MCF 10A (cell line): ENCODE measurements at regions of chr4 and their contacts with region 1.

Region 1: GRCh38 chr4:56843421-56843899 is 22.0 kb upstream of the SPINK2 start:
- DNase-seq: no peak
- H3K4me3 Mint-ChIP-seq: no peak overlapping the region
- H3K27ac Mint-ChIP-seq: no peak overlapping the region
- H3K4me1 Mint-ChIP-seq: no peaks in the 10 kb centered on the region
- H3K27me3 Mint-ChIP-seq: no peaks in the 10 kb centered on the region
- CTCF ChIP-seq: no peak

Region 2: GRCh38 chr4:56821381-56822243 is 21.8 kb before region 1 on chr4 and contains the start of gene SPINK2:
- CTCF ChIA-PET with region 1: no interaction called
- POLR2A ChIA-PET with region 1: no interaction called
- intact Hi-C with region 1: no loop called
- DNase-seq: no peak
- H3K4me3 Mint-ChIP-seq: peak within 1 kb of the TSS; percentile 49
- H3K27ac Mint-ChIP-seq: no peak within 1 kb of the TSS
- H3K4me1 Mint-ChIP-seq: no peaks in the 10 kb centered on the region
- H3K27me3 Mint-ChIP-seq: no peaks in the 10 kb centered on the region
- CTCF ChIP-seq: peak; percentile 7
- total RNA-seq, gene SPINK2: not detected in 2 replicates

Region 3: GRCh38 chr4:56857601-56858309 is 14.3 kb after region 1 on chr4:
- CTCF ChIA-PET with region 1: interaction called, 11 read pairs
- POLR2A ChIA-PET with region 1: no interaction called
- intact Hi-C with region 1: no loop called
- DNase-seq: peak; percentile 48
- H3K4me3 Mint-ChIP-seq: no peak overlapping the region
- H3K27ac Mint-ChIP-seq: peak overlapping the region; percentile 23
- H3K4me1 Mint-ChIP-seq: peaks cover 4% of the 10 kb centered on the region
- H3K27me3 Mint-ChIP-seq: no peaks in the 10 kb centered on the region
- CTCF ChIP-seq: no peak

Region 4: DNA sequence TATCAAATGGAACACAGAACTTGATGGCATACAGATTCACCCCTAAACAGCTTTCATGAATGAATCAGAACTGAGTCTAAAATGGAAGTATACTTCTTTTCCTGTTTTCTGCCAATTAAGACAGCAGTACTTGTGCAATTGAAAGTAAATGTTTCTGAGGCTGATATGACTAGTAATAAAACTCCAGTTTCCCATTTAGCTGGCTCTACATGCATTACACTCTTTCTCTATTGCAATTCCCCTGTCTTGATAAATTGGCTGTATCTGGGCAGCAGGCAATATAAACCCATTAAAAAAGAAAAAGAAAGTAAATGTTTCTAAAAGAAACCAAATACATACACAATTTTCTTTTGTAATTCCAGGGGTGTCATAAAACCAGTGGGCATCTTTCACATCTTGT is 129.3 kb after region 1 on chr4:
- CTCF ChIA-PET with region 1: no interaction called
- POLR2A ChIA-PET with region 1: no interaction called
- intact Hi-C with region 1: no loop called
- DNase-seq: no peak
- H3K4me3 Mint-ChIP-seq: no peak overlapping the region
- H3K27ac Mint-ChIP-seq: no peak overlapping the region
- H3K4me1 Mint-ChIP-seq: peaks cover 6% of the 10 kb centered on the region
- H3K27me3 Mint-ChIP-seq: no peaks in the 10 kb centered on the region
- CTCF ChIP-seq: no peak

Region 5: GRCh38 chr4:57020467-57021101 is 177.1 kb after region 1 on chr4:
- CTCF ChIA-PET with region 1: no interaction called
- POLR2A ChIA-PET with region 1: no interaction called
- intact Hi-C with region 1: no loop called
- DNase-seq: peak; percentile 80
- H3K4me3 Mint-ChIP-seq: no peak overlapping the region
- H3K27ac Mint-ChIP-seq: no peak overlapping the region
- H3K4me1 Mint-ChIP-seq: peaks cover 37% of the 10 kb centered on the region
- H3K27me3 Mint-ChIP-seq: no peaks in the 10 kb centered on the region
- CTCF ChIP-seq: no peak

Region 6: GRCh38 chr4:57083090-57083489 is 239.6 kb after region 1 on chr4:
- CTCF ChIA-PET with region 1: no interaction called
- POLR2A ChIA-PET with region 1: no interaction called
- intact Hi-C with region 1: no loop called
- DNase-seq: peak; percentile 39
- H3K4me3 Mint-ChIP-seq: no peak overlapping the region
- H3K27ac Mint-ChIP-seq: no peak overlapping the region
- H3K4me1 Mint-ChIP-seq: peaks cover 37% of the 10 kb centered on the region
- H3K27me3 Mint-ChIP-seq: no peaks in the 10 kb centered on the region
- CTCF ChIP-seq: no peak